ENCODE measurements at regions of chr12 and their contacts with region 1.

Region 1: DNA sequence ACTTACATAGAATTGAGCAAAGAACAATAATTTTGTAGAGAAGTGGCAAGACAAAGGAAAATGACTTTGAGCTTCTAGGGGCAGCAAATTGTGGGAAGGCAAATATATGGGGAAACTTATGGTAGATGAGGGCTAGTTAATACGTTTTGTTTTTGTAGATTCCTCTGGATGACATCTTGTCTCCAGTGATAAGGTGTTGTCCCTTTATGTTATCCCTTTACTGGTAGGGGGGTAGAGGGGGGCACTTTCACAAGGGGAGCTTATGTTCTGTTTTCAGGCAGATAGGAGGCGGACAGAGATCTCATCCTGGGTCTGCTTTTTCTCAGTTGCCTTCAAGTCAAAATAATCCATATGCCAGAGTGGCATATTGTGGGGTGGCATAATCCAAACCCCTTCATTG is 106.5 kb upstream of the AMIGO2 start:
- DNase-seq: no peak
- ATAC-seq: no peak
- H3K4me3 Mint-ChIP-seq: no peak overlapping the region
- H3K27ac Mint-ChIP-seq: no peak overlapping the region
- H3K4me1 Mint-ChIP-seq: peaks cover 25% of the 10 kb centered on the region
- H3K27me3 Mint-ChIP-seq: no peaks in the 10 kb centered on the region
- CTCF ChIP-seq: no peak

Region 2: GRCh38 chr12:47032644-47033043 is 153.6 kb before region 1 on chr12:
- CTCF ChIA-PET with region 1: no interaction called
- POLR2A ChIA-PET with region 1: no interaction called
- DNase-seq: no peak
- ATAC-seq: peak; percentile 66
- H3K4me3 Mint-ChIP-seq: no peak overlapping the region
- H3K27ac Mint-ChIP-seq: no peak overlapping the region
- H3K4me1 Mint-ChIP-seq: peaks cover 30% of the 10 kb centered on the region
- H3K27me3 Mint-ChIP-seq: no peaks in the 10 kb centered on the region
- CTCF ChIP-seq: peak; percentile 28; the same call in 1 of the 2 replicates

Region 3: GRCh38 chr12:47591361-47591791 is 405.1 kb after region 1 on chr12:
- CTCF ChIA-PET with region 1: no interaction called
- POLR2A ChIA-PET with region 1: interaction called, 11 read pairs
- DNase-seq: no peak
- ATAC-seq: 0 out of 2 replicates have a peak, but pooled peaks have one; percentile 32
- H3K4me3 Mint-ChIP-seq: no peak overlapping the region
- H3K27ac Mint-ChIP-seq: no peak overlapping the region
- H3K4me1 Mint-ChIP-seq: peaks cover 13% of the 10 kb centered on the region
- H3K27me3 Mint-ChIP-seq: no peaks in the 10 kb centered on the region; the same call in 1 of the 2 replicates
- CTCF ChIP-seq: no peak

Measured in WTC11 (cell line).